MCF 10A (cell line): ENCODE measurements at regions of chr7 and their contacts with region 1.

Region 1: GRCh38 chr7:18345641-18346234 is 149.8 kb upstream of the HDAC9 start:
- DNase-seq: peak; percentile 78
- H3K4me3 Mint-ChIP-seq: no peak overlapping the region
- H3K27ac Mint-ChIP-seq: no peak overlapping the region
- H3K4me1 Mint-ChIP-seq: no peaks in the 10 kb centered on the region
- H3K27me3 Mint-ChIP-seq: no peaks in the 10 kb centered on the region
- CTCF ChIP-seq: peak; percentile 74

Region 2: DNA sequence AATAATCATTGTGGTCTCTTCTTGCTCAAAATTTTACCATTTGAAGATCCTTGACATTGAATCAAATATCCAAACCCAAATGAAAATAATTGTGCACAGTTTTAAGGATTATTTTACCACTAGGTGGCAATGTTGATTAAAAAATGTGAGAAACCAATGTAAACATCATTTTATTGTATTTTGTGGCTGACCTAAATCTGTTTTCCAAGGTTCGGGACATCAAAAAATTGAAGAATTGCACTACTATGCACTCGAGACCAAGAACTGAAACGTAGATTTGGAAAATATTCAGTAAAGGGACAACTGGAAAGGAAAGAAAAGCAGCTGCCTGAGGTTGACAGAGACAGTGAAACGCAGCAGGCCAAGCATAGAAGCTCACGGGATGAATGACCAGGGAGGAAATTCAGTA is 664.8 kb before region 1 on chr7:
- CTCF ChIA-PET with region 1: interaction called, 18 read pairs
- POLR2A ChIA-PET with region 1: no interaction called
- intact Hi-C with region 1: no loop called
- DNase-seq: peak; percentile 41
- H3K4me3 Mint-ChIP-seq: peak overlapping the region; percentile 37
- H3K27ac Mint-ChIP-seq: peak overlapping the region; percentile 95
- H3K4me1 Mint-ChIP-seq: peaks cover 69% of the 10 kb centered on the region
- H3K27me3 Mint-ChIP-seq: no peaks in the 10 kb centered on the region
- CTCF ChIP-seq: peak; percentile 35

Region 3: GRCh38 chr7:17713584-17713983 is 632.2 kb before region 1 on chr7:
- CTCF ChIA-PET with region 1: interaction called, 11 read pairs
- POLR2A ChIA-PET with region 1: no interaction called
- intact Hi-C with region 1: no loop called
- DNase-seq: no peak
- H3K4me3 Mint-ChIP-seq: no peak overlapping the region
- H3K27ac Mint-ChIP-seq: no peak overlapping the region
- H3K4me1 Mint-ChIP-seq: no peaks in the 10 kb centered on the region
- H3K27me3 Mint-ChIP-seq: no peaks in the 10 kb centered on the region
- CTCF ChIP-seq: no peak

Region 4: DNA sequence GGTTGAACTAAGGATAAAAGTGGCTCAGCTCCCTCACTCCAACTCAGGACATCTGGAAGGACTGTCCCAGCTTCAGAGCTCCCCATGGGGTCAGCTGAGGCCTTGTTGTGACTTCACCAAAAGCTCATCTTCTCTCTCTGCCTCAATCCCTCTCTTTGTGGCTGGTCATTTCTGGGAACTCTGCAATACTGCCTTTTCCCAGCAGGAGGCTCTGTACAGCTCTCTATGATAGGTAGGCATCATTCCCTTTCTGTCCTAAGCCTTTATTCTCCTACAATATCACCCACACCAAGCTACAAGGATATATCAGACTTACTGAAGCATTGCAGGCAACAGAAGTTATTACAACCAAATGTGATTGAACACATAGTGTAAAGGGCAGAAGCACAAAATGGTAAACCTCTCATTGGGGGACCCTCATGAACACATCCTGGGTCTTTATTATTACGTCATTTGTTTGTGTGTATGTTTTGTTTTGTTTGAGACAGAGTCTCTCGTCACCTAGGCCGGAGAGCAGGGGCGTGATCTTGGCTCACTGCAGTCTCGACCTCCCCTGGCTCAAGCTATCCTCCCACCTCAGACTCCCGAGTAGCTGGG is 281.4 kb before region 1 on chr7:
- CTCF ChIA-PET with region 1: no interaction called
- POLR2A ChIA-PET with region 1: no interaction called
- intact Hi-C with region 1: loop called (anchors 2 kb)
- DNase-seq: peak; percentile 49
- H3K4me3 Mint-ChIP-seq: no peak overlapping the region
- H3K27ac Mint-ChIP-seq: no peak overlapping the region
- H3K4me1 Mint-ChIP-seq: no peaks in the 10 kb centered on the region
- H3K27me3 Mint-ChIP-seq: no peaks in the 10 kb centered on the region
- CTCF ChIP-seq: peak; percentile 46

Region 5: DNA sequence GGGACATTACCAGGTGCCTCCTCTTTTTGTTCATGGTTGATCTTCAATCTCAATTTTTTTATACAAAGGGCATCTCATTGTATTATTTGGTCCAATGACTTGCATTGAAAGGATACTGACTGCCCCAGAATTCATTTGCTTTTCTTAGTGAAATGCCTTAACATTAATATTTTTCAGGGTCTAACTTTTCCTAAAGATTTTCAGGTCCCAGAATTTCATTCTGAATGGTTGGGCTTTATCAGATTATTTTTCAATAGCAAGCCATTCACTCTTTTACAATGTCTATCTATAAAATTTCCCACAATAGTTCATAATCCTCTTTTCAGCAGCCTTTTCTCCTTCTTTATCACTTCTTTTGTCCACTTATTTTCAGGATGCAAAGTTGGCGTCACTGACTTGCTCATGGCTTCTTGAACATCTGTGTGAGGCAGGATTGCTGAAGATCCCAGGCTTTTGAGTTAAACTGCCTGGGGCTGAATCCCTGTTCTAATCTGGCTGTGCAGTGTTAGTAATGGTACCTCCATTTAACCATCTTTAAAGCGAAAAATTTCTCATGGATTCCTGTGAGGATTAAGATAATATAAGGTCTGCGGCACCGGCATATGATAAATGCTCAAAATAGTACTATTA is 18.1 kb after region 1 on chr7:
- CTCF ChIA-PET with region 1: no interaction called
- POLR2A ChIA-PET with region 1: no interaction called
- intact Hi-C with region 1: no loop called
- DNase-seq: no peak
- H3K4me3 Mint-ChIP-seq: no peak overlapping the region
- H3K27ac Mint-ChIP-seq: no peak overlapping the region
- H3K4me1 Mint-ChIP-seq: peaks cover 7% of the 10 kb centered on the region
- H3K27me3 Mint-ChIP-seq: no peaks in the 10 kb centered on the region
- CTCF ChIP-seq: no peak

Region 6: GRCh38 chr7:18458830-18459229 is 113.1 kb after region 1 on chr7:
- CTCF ChIA-PET with region 1: no interaction called
- POLR2A ChIA-PET with region 1: no interaction called
- intact Hi-C with region 1: no loop called
- DNase-seq: peak; percentile 48
- H3K4me3 Mint-ChIP-seq: no peak overlapping the region
- H3K27ac Mint-ChIP-seq: no peak overlapping the region
- H3K4me1 Mint-ChIP-seq: peaks cover 14% of the 10 kb centered on the region
- H3K27me3 Mint-ChIP-seq: no peaks in the 10 kb centered on the region
- CTCF ChIP-seq: no peak